Vagina (tissue), 2 donors: ENCODE measurements at regions of chr6 and their contacts with region 1.

Region 1: DNA sequence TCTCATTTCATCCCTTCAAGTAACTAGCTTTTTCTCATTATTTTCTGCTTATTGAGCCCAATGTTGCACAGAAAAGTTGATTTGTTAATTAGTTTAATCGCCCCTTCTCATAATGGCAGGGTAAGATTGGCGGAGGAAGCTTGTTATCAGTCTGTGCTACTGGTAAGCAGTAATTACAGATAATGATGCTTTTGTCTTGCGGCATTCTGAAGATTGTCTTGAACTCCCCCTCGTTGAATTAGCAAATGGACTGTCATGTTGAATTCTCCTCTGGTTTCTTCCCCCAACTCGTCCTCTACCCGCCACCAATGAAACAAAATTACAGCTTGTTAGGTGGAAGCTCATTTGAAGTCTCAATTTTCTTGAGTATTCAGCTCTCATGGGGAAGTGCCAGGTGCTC is 39.4 kb downstream of the PRDM13 start:
- DNase-seq: no peak
- H3K4me3 ChIP-seq: no peak overlapping the region
- H3K27ac ChIP-seq: no peak overlapping the region
- H3K4me1 ChIP-seq: no peaks in the 10 kb centered on the region
- H3K27me3 ChIP-seq: no peaks in the 10 kb centered on the region
- CTCF ChIP-seq: no peak
- POLR2A ChIP-seq: no peak

Region 2: GRCh38 chr6:97805596-97805995 is 1840.4 kb before region 1 on chr6:
- intact Hi-C with region 1: loop called (anchors 5 kb)
- DNase-seq: no peak
- H3K4me3 ChIP-seq: no peak overlapping the region
- H3K27ac ChIP-seq: no peak overlapping the region
- H3K4me1 ChIP-seq: no peaks in the 10 kb centered on the region
- H3K27me3 ChIP-seq: no peaks in the 10 kb centered on the region
- CTCF ChIP-seq: no peak
- POLR2A ChIP-seq: no peak

Region 3: DNA sequence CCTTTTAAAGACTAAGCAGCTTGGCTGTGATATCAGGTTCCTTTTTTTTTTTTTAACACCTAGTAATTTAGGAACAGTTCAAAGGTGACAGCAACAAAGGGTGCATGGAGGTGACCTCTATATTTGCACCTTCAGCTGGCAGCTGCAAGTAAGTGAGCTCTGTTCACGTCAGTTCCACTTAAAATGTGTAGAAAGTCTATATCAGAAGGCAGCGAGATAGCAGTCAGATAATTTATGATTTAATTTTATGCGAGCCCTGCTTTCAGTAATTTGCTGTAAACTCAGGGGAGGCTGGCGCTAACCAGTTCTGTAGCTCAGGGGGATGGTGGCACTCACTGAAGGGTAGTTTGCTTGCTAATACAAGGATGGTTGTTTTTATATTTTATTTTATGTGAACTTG is 1760.2 kb before region 1 on chr6:
- intact Hi-C with region 1: no loop called
- DNase-seq: no peak
- H3K4me3 ChIP-seq: no peak overlapping the region
- H3K27ac ChIP-seq: no peak overlapping the region
- H3K4me1 ChIP-seq: no peaks in the 10 kb centered on the region
- H3K27me3 ChIP-seq: no peaks in the 10 kb centered on the region
- CTCF ChIP-seq: no peak
- POLR2A ChIP-seq: no peak

Region 4: GRCh38 chr6:99852031-99852430 is 206.0 kb after region 1 on chr6:
- intact Hi-C with region 1: no loop called
- DNase-seq: no peak
- H3K4me3 ChIP-seq: no peak overlapping the region
- H3K27ac ChIP-seq: no peak overlapping the region
- H3K4me1 ChIP-seq: no peaks in the 10 kb centered on the region
- H3K27me3 ChIP-seq: no peaks in the 10 kb centered on the region
- CTCF ChIP-seq: no peak
- POLR2A ChIP-seq: no peak